Posterior vena cava (tissue), 2 donors: ENCODE measurements at regions of chr20 and their contacts with region 1.

Region 1: GRCh38 chr20:47317127-47317895 is 39.2 kb downstream of the ZMYND8 start:
- DNase-seq: peak; percentile 95

Region 2: GRCh38 chr20:47181056-47181862 is 136.1 kb before region 1 on chr20:
- intact Hi-C with region 1: no loop called
- DNase-seq: peak; percentile 66

Region 3: GRCh38 chr20:47258745-47259695 is 58.3 kb before region 1 on chr20:
- intact Hi-C with region 1: no loop called
- DNase-seq: no peak

Region 4: DNA sequence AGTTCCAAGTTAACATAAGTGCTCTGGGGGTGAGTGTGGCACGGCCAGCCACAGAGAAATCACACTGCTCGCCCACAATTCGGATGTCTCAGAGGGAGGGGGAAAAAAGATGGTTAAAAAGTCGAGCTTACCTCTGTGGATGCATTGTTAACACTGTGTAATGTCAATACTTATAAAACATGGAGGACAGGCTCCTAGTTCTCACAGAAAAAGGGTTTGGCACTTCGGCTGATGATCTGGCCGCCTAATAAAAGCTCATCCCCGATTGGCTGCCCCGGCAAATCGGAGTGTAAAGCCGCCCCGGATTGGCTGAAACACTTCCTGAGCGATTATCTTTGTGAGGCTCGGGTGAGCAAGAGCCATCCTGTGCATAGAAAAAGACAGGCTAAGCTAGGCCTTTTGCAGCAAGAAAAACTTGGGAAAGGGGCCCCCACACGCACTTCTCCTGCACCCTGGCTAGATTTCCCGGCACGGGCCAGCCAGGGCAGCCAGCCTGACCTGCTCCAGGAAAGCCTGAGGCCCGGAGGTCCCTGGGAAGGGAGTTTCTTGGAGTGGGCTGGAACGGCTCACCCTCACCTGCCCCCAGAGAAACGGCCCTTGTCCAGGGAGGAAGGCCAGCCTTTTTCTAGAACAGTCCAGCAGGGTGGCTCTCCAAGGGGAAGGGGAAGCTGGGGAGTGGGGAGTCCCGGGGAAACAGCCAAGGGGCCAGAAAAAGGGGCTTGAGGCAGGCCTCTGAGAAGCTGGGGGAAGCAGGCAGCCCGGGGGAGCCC is 39.4 kb after region 1 on chr20 and contains the start of gene ZMYND8:
- intact Hi-C with region 1: loop called (anchors 2 to 5 kb)
- DNase-seq: peak; percentile 96
- total RNA-seq, gene ZMYND8: 28.0 to 29.3 TPM

Region 5: GRCh38 chr20:47379433-47380150 is 62.3 kb after region 1 on chr20:
- intact Hi-C with region 1: loop called in 1 of 2 experiments (anchors 5 kb)
- DNase-seq: no peak

Region 6: GRCh38 chr20:47586646-47587306 is 269.5 kb after region 1 on chr20:
- intact Hi-C with region 1: no loop called
- DNase-seq: no peak